ENCODE measurements at regions of chr16 and their contacts with region 1.

Region 1: GRCh38 chr16:70653809-70654771 is 7.7 kb downstream of the IL34 start:
- DNase-seq: peak in 3 of 4 donors; percentile 26 to 88 (median 81)
- ATAC-seq: peak; percentile 95
- H3K4me3 ChIP-seq: no peak overlapping the region
- H3K27ac ChIP-seq: no peak overlapping the region
- H3K4me1 ChIP-seq: peaks cover 0 to 3% of the 10 kb centered on the region in 2 donors
- H3K27me3 ChIP-seq: no peaks in the 10 kb centered on the region
- CTCF ChIP-seq: peak; percentile 78 to 91

Region 2: GRCh38 chr16:69554495-69554894 is 1099.6 kb before region 1 on chr16:
- intact Hi-C with region 1: no loop called
- DNase-seq: no peak
- ATAC-seq: no peak
- H3K4me3 ChIP-seq: no peak overlapping the region
- H3K27ac ChIP-seq: no peak overlapping the region
- H3K4me1 ChIP-seq: no peaks in the 10 kb centered on the region
- H3K27me3 ChIP-seq: no peaks in the 10 kb centered on the region
- CTCF ChIP-seq: no peak

Region 3: DNA sequence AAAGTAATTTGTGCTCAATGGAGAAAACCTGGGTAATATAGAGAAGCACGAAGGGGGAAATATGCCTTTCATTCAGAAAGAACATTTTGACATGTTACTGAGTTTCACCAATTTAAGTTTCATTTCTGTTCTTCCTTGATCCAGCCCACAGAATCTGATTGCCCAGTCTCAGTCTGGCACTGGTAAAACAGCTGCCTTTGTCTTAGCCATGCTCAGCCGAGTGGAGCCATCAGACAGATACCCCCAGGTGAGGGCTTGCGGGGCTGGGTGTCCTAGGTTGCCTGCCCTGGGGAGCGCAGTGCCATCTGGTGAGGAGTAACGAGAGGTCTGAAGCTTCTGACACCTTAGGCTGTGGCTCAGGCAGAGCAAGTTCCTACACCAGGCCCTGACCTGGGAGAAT is 289.7 kb before region 1 on chr16:
- intact Hi-C with region 1: loop called in 1 of 2 experiments (anchors 10 kb)
- DNase-seq: no peak
- ATAC-seq: no peak
- H3K4me3 ChIP-seq: no peak overlapping the region
- H3K27ac ChIP-seq: no peak overlapping the region
- H3K4me1 ChIP-seq: no peaks in the 10 kb centered on the region
- H3K27me3 ChIP-seq: no peaks in the 10 kb centered on the region
- CTCF ChIP-seq: no peak

Region 4: DNA sequence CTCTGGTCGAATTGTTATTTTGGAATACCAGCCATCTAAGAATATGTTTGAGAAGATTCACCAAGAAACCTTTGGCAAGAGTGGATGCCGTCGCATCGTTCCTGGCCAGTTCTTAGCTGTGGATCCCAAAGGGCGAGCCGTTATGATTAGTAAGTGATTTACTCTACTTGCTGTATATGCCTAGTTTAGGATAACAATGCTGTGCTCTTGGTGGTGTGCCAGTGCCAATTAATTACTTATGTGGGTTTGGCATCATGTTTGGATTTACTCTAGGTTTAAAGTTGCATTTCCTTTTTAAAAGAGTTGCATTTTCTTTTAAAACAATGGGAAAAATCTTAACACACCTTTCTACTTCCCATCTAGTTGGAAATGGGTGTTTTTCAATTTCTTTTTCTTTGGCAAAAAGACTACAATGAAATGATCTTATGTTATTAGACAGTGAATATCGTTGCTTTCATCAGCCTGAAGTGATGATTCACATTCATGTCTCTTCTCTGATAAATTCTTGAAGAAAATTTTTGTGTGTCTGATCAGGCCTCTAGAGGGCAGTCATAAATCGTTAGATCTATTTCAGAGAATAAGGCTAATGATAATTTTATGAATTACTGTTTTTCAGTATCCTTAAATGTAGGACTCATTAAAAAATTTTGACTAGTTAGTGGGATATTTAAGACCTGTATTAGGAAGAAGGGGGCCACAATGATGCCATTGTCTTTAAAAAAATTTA is 124.9 kb before region 1 on chr16:
- intact Hi-C with region 1: loop called in 1 of 2 experiments (anchors 5 kb)
- DNase-seq: peak in 1 of 4 donors; percentile 22
- ATAC-seq: peak; percentile 57
- H3K4me3 ChIP-seq: no peak overlapping the region
- H3K27ac ChIP-seq: no peak overlapping the region
- H3K4me1 ChIP-seq: peaks cover 12 to 52% of the 10 kb centered on the region in 2 donors
- H3K27me3 ChIP-seq: no peaks in the 10 kb centered on the region
- CTCF ChIP-seq: peak; percentile 21 to 37